ENCODE measurements at regions of chr5 and their contacts with region 1.

Region 1: DNA sequence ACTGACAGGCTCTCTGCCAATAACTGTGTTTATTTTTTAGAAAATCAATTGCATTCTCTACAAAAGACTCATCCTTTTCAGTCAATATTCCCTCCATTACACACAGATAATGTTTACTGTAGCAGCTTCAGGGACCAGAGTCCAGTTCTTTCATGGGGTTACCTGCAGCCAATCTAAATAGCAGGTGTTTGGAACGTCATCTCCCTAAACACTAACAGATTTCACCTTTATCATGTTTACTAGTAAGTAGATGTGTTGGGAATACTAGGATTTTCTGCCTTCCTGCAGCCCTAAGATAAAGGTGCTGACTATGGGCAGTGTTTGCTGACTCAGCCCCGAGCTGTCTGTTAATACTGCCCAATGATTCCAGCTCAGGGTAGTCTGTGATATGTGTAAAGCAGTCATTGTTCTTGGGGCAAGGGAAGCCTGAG is 447.0 kb downstream of the KIF4B start:
- DNase-seq: peak in 1 of 2 experiments; percentile 15
- H3K4me3 ChIP-seq: no peak overlapping the region
- H3K4me3 Mint-ChIP-seq: no peak overlapping the region
- H3K27ac Mint-ChIP-seq: no peak overlapping the region
- H3K4me1 ChIP-seq: peaks cover 18% of the 10 kb centered on the region
- H3K4me1 Mint-ChIP-seq: peaks cover 25% of the 10 kb centered on the region
- H3K27me3 ChIP-seq: no peaks in the 10 kb centered on the region
- H3K27me3 Mint-ChIP-seq: no peaks in the 10 kb centered on the region
- CTCF ChIP-seq: no peak

Region 2: GRCh38 chr5:155366096-155366495 is 94.4 kb before region 1 on chr5:
- CTCF ChIA-PET with region 1: no interaction called
- POLR2A ChIA-PET with region 1: no interaction called
- intact Hi-C with region 1: no loop called
- DNase-seq: no peak
- H3K4me3 ChIP-seq: no peak overlapping the region
- H3K4me3 Mint-ChIP-seq: no peak overlapping the region
- H3K27ac Mint-ChIP-seq: no peak overlapping the region
- H3K4me1 ChIP-seq: no peaks in the 10 kb centered on the region
- H3K4me1 Mint-ChIP-seq: no peaks in the 10 kb centered on the region
- H3K27me3 ChIP-seq: no peaks in the 10 kb centered on the region
- H3K27me3 Mint-ChIP-seq: peaks cover 6% of the 10 kb centered on the region
- CTCF ChIP-seq: no peak

Region 3: GRCh38 chr5:155514105-155514563 is 53.6 kb after region 1 on chr5:
- CTCF ChIA-PET with region 1: no interaction called
- POLR2A ChIA-PET with region 1: no interaction called
- intact Hi-C with region 1: loop called (anchors 1 kb)
- DNase-seq: peak; percentile 58 to 77
- H3K4me3 ChIP-seq: no peak overlapping the region
- H3K4me3 Mint-ChIP-seq: no peak overlapping the region
- H3K27ac Mint-ChIP-seq: peak overlapping the region; percentile 55
- H3K4me1 ChIP-seq: peaks cover 14% of the 10 kb centered on the region
- H3K4me1 Mint-ChIP-seq: peaks cover 8% of the 10 kb centered on the region
- H3K27me3 ChIP-seq: no peaks in the 10 kb centered on the region
- H3K27me3 Mint-ChIP-seq: peaks cover 2% of the 10 kb centered on the region
- CTCF ChIP-seq: no peak

Measured in Caco-2 (cell line).